ENCODE measurements at regions of chr5 and their contacts with region 1.

Region 1: GRCh38 chr5:129767906-129768380 is 20.0 kb downstream of the MINAR2 start:
- DNase-seq: peak; percentile 84
- H3K4me3 ChIP-seq: no peak overlapping the region
- H3K27ac ChIP-seq: no peak overlapping the region
- H3K4me1 ChIP-seq: no peaks in the 10 kb centered on the region
- H3K27me3 ChIP-seq: no peaks in the 10 kb centered on the region
- CTCF ChIP-seq: peak; percentile 96 to 99

Region 2: DNA sequence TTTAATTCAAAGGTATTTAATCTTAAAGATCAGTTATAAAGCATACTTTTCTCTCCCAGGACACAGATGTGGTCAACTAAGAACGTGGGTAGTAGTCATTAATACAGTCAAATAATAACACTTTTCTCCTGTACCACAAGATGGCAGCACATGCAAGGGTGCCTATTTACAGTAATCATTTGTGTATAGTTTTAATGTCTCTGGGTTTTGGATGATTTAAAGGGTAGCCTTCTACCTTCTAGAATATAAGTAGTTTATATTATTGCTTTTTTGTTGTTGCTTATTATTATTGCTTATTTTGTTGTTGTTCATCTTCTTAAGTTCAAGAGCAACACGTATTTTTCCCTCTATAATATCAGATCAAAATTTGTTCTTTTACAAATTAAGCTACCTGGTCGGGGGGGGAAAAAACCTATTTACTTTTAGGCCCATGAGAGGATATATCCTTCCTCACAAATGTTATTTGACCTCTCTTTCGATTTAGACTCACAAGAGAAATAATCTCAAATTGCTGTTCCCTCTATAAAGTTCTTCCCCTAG is 862.3 kb before region 1 on chr5:
- CTCF ChIA-PET with region 1: no interaction called
- dilution Hi-C with region 1: no loop called
- in situ Hi-C with region 1: loop called (anchors 25 kb)
- intact Hi-C with region 1: loop called (anchors 1 kb)
- DNase-seq: peak; percentile 36
- H3K4me3 ChIP-seq: no peak overlapping the region
- H3K27ac ChIP-seq: no peak overlapping the region
- H3K4me1 ChIP-seq: no peaks in the 10 kb centered on the region
- H3K27me3 ChIP-seq: peaks cover 3% of the 10 kb centered on the region
- CTCF ChIP-seq: peak; percentile 78 to 88

Region 3: GRCh38 chr5:129271303-129271702 is 496.6 kb before region 1 on chr5:
- CTCF ChIA-PET with region 1: no interaction called
- dilution Hi-C with region 1: no loop called
- in situ Hi-C with region 1: no loop called
- intact Hi-C with region 1: loop called (anchors 5 kb)
- DNase-seq: peak; percentile 5
- H3K4me3 ChIP-seq: no peak overlapping the region
- H3K27ac ChIP-seq: no peak overlapping the region
- H3K4me1 ChIP-seq: no peaks in the 10 kb centered on the region
- H3K27me3 ChIP-seq: no peaks in the 10 kb centered on the region
- CTCF ChIP-seq: peak; percentile 6 to 50

Region 4: GRCh38 chr5:129460936-129461711 is 306.8 kb before region 1 on chr5:
- CTCF ChIA-PET with region 1: no interaction called
- dilution Hi-C with region 1: no loop called
- in situ Hi-C with region 1: no loop called
- intact Hi-C with region 1: loop called (anchors 5 kb)
- DNase-seq: peak; percentile 1
- H3K4me3 ChIP-seq: peak overlapping the region; percentile 5 to 39 (median 37)
- H3K27ac ChIP-seq: no peak overlapping the region
- H3K4me1 ChIP-seq: peaks cover 10% of the 10 kb centered on the region
- H3K27me3 ChIP-seq: peaks cover 27% of the 10 kb centered on the region
- CTCF ChIP-seq: no peak

Region 5: GRCh38 chr5:129852747-129853352 is 84.9 kb after region 1 on chr5:
- CTCF ChIA-PET with region 1: interaction called, 11 read pairs
- dilution Hi-C with region 1: no loop called
- in situ Hi-C with region 1: loop called (anchors 5 kb)
- intact Hi-C with region 1: loop called (anchors 1 kb)
- DNase-seq: peak; percentile 52
- H3K4me3 ChIP-seq: no peak overlapping the region
- H3K27ac ChIP-seq: no peak overlapping the region
- H3K4me1 ChIP-seq: no peaks in the 10 kb centered on the region
- H3K27me3 ChIP-seq: peaks cover 2% of the 10 kb centered on the region
- CTCF ChIP-seq: peak; percentile 96 to 98

Region 6: GRCh38 chr5:131109540-131110255 is 1341.8 kb after region 1 on chr5:
- CTCF ChIA-PET with region 1: no interaction called
- dilution Hi-C with region 1: no loop called
- in situ Hi-C with region 1: no loop called
- intact Hi-C with region 1: loop called (anchors 2 kb)
- DNase-seq: peak; percentile 34
- H3K4me3 ChIP-seq: no peak overlapping the region
- H3K27ac ChIP-seq: no peak overlapping the region
- H3K4me1 ChIP-seq: no peaks in the 10 kb centered on the region
- H3K27me3 ChIP-seq: peaks cover 2% of the 10 kb centered on the region
- CTCF ChIP-seq: peak; percentile 74 to 79